Caco-2 (cell line): ENCODE measurements at regions of chr3 and their contacts with region 1.

Region 1: GRCh38 chr3:42159706-42160472 is 68.7 kb downstream of the TRAK1 start:
- DNase-seq: peak; percentile 87 to 94
- H3K4me3 ChIP-seq: peak overlapping the region; percentile 42
- H3K4me3 Mint-ChIP-seq: peak overlapping the region; percentile 80
- H3K27ac Mint-ChIP-seq: peak overlapping the region; percentile 75
- H3K4me1 ChIP-seq: peaks cover 24% of the 10 kb centered on the region
- H3K4me1 Mint-ChIP-seq: peaks cover 17% of the 10 kb centered on the region
- H3K27me3 ChIP-seq: no peaks in the 10 kb centered on the region
- H3K27me3 Mint-ChIP-seq: no peaks in the 10 kb centered on the region
- CTCF ChIP-seq: no peak

Region 2: GRCh38 chr3:41961750-41962679 is 197.9 kb before region 1 on chr3 and contains the start of gene ULK4:
- CTCF ChIA-PET with region 1: no interaction called
- POLR2A ChIA-PET with region 1: no interaction called
- intact Hi-C with region 1: no loop called
- DNase-seq: peak; percentile 97 to 98
- H3K4me3 ChIP-seq: peak within 1 kb of the TSS; percentile 61
- H3K4me3 Mint-ChIP-seq: peak within 1 kb of the TSS; percentile 99
- H3K27ac Mint-ChIP-seq: peak within 1 kb of the TSS; percentile 98
- H3K4me1 ChIP-seq: peaks cover 5% of the 10 kb centered on the region; the same call in 1 of the 2 replicates
- H3K4me1 Mint-ChIP-seq: peaks cover 7% of the 10 kb centered on the region
- H3K27me3 ChIP-seq: no peaks in the 10 kb centered on the region
- H3K27me3 Mint-ChIP-seq: no peaks in the 10 kb centered on the region
- CTCF ChIP-seq: no peak
- total RNA-seq, gene ULK4: 4.2 and 4.6 TPM in 2 replicates

Region 3: DNA sequence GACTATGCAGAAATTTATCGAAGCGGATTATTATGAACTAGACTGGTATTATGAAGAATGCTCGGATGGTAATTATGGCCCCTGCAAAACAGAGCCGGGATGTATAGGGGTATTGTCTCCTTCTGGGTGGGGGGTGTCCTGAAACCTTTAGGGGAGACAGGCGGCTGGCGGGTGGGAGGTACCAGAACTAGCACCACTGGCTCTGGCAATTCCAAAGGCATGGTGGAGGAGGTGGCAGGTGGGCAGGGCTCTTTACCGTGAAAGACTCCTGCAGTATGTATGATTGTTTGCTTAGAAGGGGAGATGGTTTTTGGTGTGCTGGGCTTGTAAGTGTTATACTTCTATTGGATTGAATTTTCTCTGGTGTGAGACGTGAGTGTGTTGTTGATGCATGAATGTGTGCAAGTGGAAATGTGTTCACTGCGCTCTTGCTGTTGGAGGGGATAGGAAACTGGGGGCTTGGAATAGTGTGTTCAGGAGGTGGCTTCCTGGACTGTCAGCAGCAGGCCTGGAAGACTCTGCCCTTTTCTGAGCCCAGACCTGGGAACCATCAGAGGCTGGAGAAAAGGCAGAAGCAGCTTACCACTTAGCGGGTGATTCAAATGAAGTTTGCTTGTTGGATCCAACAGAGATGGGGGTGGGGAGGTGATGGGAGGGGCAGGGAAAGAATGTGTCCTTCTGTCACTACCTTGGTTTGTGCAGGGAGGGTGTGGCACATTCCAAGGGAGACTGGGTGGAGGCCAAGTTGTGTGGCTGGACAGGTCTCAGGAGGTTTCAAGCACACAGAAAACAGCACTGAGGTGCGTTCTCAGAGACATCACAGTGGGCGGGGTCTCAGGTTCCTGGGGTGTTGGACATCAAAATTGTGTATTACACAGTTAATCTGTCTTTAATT is 10.1 kb before region 1 on chr3:
- CTCF ChIA-PET with region 1: no interaction called
- POLR2A ChIA-PET with region 1: interaction called, 7 read pairs
- intact Hi-C with region 1: loop called (anchors 1 kb)
- DNase-seq: peak; percentile 88 to 97
- H3K4me3 ChIP-seq: no peak overlapping the region
- H3K4me3 Mint-ChIP-seq: peak overlapping the region; percentile 51
- H3K27ac Mint-ChIP-seq: peak overlapping the region; percentile 89
- H3K4me1 ChIP-seq: peaks cover 46% of the 10 kb centered on the region
- H3K4me1 Mint-ChIP-seq: peaks cover 18% of the 10 kb centered on the region
- H3K27me3 ChIP-seq: no peaks in the 10 kb centered on the region
- H3K27me3 Mint-ChIP-seq: no peaks in the 10 kb centered on the region
- CTCF ChIP-seq: no peak

Region 4: DNA sequence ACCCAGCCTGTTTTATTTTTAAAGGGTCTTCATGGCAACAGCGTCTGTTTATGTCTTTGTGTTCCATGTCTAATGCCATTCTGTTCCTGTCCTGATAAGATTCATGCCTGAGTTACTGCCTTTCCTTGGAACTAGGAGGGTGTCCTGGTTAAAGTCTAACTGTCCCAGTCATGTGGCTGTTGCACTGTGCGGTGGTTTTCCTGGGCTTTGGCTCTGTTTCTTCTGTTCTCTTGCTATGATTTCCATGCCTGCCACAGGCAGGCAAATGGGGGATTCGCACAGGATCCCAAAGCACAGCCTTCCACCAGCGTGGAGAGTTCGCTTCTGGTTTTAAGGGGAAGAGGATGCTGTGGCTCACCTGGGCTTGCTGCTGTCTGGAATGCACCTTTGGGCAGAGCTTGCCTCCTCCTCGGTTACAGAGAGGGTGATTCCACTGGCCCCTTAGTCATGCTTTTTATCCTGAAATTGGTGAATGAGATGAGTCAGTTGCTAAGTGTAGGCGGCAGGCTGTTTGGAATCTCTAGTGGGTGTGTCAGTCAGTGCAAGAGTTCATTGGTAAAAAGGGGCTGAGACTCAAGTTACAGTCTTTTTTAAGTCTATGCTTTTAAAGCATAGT is 19.3 kb after region 1 on chr3:
- CTCF ChIA-PET with region 1: no interaction called
- POLR2A ChIA-PET with region 1: no interaction called
- intact Hi-C with region 1: loop called (anchors 1 kb)
- DNase-seq: peak; percentile 69
- H3K4me3 ChIP-seq: no peak overlapping the region
- H3K4me3 Mint-ChIP-seq: peak overlapping the region; percentile 67
- H3K27ac Mint-ChIP-seq: peak overlapping the region; percentile 96
- H3K4me1 ChIP-seq: peaks cover 30% of the 10 kb centered on the region
- H3K4me1 Mint-ChIP-seq: peaks cover 17% of the 10 kb centered on the region
- H3K27me3 ChIP-seq: no peaks in the 10 kb centered on the region
- H3K27me3 Mint-ChIP-seq: no peaks in the 10 kb centered on the region
- CTCF ChIP-seq: no peak

Region 5: DNA sequence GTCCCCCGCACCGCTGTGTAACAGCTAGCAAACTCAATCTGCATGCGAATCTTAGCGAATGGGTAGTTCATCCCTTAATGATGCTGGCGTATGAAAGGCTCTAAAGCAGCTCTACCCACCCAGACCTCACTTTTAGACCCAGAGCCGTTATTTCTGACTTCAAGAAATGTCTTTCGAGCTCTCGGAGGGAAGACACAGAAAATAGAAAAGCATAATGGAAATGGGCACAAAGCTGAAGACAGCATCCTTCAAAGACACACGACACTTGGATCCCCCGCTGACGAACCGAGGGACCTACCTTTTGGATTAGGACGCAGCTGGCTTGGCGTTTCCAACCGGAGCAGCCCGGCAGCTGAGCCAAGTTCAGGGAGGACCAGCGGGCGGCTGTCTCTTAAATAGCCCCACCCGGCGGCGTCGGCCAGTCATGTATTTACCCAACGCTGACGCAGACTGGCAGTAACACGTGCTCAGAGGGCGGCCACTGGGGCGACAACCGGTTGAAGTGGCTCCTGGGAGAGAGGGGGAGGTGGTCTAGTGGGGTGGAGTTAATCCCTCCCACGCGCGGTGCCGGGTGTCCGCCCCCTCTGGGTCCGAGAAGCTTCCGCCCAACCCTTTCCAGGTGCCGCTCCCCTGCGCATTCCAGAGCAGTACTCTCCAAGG is 104.6 kb after region 1 on chr3:
- CTCF ChIA-PET with region 1: no interaction called
- POLR2A ChIA-PET with region 1: no interaction called
- intact Hi-C with region 1: no loop called
- DNase-seq: peak; percentile 62 to 73
- H3K4me3 ChIP-seq: no peak overlapping the region
- H3K4me3 Mint-ChIP-seq: peak overlapping the region; percentile 63
- H3K27ac Mint-ChIP-seq: no peak overlapping the region
- H3K4me1 ChIP-seq: no peaks in the 10 kb centered on the region
- H3K4me1 Mint-ChIP-seq: no peaks in the 10 kb centered on the region
- H3K27me3 ChIP-seq: no peaks in the 10 kb centered on the region
- H3K27me3 Mint-ChIP-seq: peaks cover 27% of the 10 kb centered on the region
- CTCF ChIP-seq: no peak